ENCODE measurements at regions of chr10 and their contacts with region 1.

Region 1: GRCh38 chr10:68901104-68901927 is at the start of gene DDX50:
- DNase-seq: peak; percentile 98
- H3K4me3 Mint-ChIP-seq: peak within 1 kb of the TSS; percentile 95
- H3K27ac Mint-ChIP-seq: peak within 1 kb of the TSS; percentile 97
- H3K4me1 Mint-ChIP-seq: peaks cover 46% of the 10 kb centered on the region
- H3K27me3 Mint-ChIP-seq: no peaks in the 10 kb centered on the region
- total RNA-seq, gene DDX50: 68.8 to 71.9 TPM

Region 2: GRCh38 chr10:68208424-68209042 is 692.8 kb before region 1 on chr10:
- CTCF ChIA-PET with region 1: interaction called, 3 read pairs
- POLR2A ChIA-PET with region 1: no interaction called
- intact Hi-C with region 1: loop called (anchors 10 kb)
- DNase-seq: peak; percentile 57
- H3K4me3 Mint-ChIP-seq: no peak overlapping the region
- H3K27ac Mint-ChIP-seq: no peak overlapping the region
- H3K4me1 Mint-ChIP-seq: no peaks in the 10 kb centered on the region
- H3K27me3 Mint-ChIP-seq: peaks cover 8% of the 10 kb centered on the region

Region 3: GRCh38 chr10:68471586-68472408 is 429.5 kb before region 1 on chr10 and contains the start of gene DNA2:
- CTCF ChIA-PET with region 1: no interaction called
- POLR2A ChIA-PET with region 1: no interaction called
- intact Hi-C with region 1: loop called (anchors 2 kb)
- DNase-seq: peak; percentile 86
- H3K4me3 Mint-ChIP-seq: peak within 1 kb of the TSS; percentile 95
- H3K27ac Mint-ChIP-seq: peak within 1 kb of the TSS; percentile 89
- H3K4me1 Mint-ChIP-seq: peaks cover 19% of the 10 kb centered on the region
- H3K27me3 Mint-ChIP-seq: no peaks in the 10 kb centered on the region
- total RNA-seq, gene DNA2: 36.8 to 42.0 TPM

Region 4: DNA sequence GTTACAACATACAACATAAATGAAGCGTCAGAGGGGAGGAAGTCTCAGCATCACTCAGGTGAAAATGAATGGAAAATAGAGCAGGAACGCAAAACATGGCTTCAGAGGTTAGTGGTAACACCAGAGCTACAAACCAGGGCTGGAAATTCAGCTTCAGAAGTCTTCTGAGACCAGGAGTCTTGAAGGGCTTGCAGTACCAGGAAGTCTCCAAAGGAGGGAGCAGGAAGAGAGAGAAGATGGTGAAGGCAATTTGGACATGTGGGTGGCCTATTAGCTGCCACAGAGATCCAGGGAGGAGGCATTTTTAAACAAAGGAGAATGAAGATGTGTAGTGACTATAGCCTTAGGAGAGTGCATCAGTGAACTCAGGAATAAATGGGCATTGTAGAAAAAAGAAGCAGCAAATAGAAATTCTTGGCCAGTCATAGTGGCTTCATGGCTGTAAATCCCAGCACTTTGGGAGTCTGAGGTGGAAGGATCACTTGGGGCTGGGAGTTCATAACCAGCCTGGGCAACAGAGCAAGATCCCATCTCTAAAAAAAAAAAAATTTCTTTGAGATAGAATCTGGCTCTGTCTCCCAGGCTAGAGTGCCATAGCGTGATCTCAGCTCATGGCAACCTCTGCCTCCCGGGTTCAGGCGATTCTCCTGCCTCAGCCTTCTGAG is 350.4 kb before region 1 on chr10:
- CTCF ChIA-PET with region 1: interaction called, 3 read pairs
- POLR2A ChIA-PET with region 1: no interaction called
- intact Hi-C with region 1: loop called (anchors 2 kb)
- DNase-seq: peak; percentile 54
- H3K4me3 Mint-ChIP-seq: no peak overlapping the region
- H3K27ac Mint-ChIP-seq: no peak overlapping the region
- H3K4me1 Mint-ChIP-seq: no peaks in the 10 kb centered on the region
- H3K27me3 Mint-ChIP-seq: no peaks in the 10 kb centered on the region

Region 5: DNA sequence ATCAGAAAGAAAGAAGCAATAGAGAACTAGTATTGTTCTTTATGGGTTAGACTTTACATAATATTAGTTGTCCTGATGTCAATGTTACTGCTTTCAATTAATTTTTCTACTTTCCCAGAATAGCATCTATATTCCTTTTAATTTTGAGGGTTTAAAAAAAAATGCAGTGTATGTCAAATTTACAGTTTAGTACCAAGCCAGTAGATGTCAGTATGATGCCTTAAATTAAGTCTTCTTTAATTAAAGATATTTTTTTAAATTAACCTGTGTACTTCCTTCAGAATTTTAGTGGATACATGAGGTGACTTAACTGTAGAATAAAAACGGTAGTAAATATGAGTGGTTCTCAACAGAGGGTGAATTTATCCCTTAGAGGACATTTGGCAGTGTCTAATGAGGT is 109.2 kb before region 1 on chr10:
- CTCF ChIA-PET with region 1: no interaction called
- POLR2A ChIA-PET with region 1: interaction called, 7 read pairs
- intact Hi-C with region 1: loop called (anchors 10 kb)
- DNase-seq: no peak
- H3K4me3 Mint-ChIP-seq: no peak overlapping the region
- H3K27ac Mint-ChIP-seq: no peak overlapping the region
- H3K4me1 Mint-ChIP-seq: peaks cover 7% of the 10 kb centered on the region
- H3K27me3 Mint-ChIP-seq: no peaks in the 10 kb centered on the region

Region 6: GRCh38 chr10:68870545-68871104 is 30.7 kb before region 1 on chr10:
- CTCF ChIA-PET with region 1: no interaction called
- POLR2A ChIA-PET with region 1: no interaction called
- intact Hi-C with region 1: loop called (anchors 1 kb)
- DNase-seq: peak; percentile 40
- H3K4me3 Mint-ChIP-seq: no peak overlapping the region
- H3K27ac Mint-ChIP-seq: no peak overlapping the region
- H3K4me1 Mint-ChIP-seq: peaks cover 9% of the 10 kb centered on the region
- H3K27me3 Mint-ChIP-seq: no peaks in the 10 kb centered on the region

Region 7: GRCh38 chr10:69087590-69088470 is 186.5 kb after region 1 on chr10 and contains the start of gene SRGN:
- CTCF ChIA-PET with region 1: no interaction called
- POLR2A ChIA-PET with region 1: interaction called, 3 read pairs
- intact Hi-C with region 1: loop called (anchors 1 kb)
- DNase-seq: peak; percentile 87
- H3K4me3 Mint-ChIP-seq: peak within 1 kb of the TSS; percentile 94
- H3K27ac Mint-ChIP-seq: peak within 1 kb of the TSS; percentile 96
- H3K4me1 Mint-ChIP-seq: peaks cover 41% of the 10 kb centered on the region
- H3K27me3 Mint-ChIP-seq: no peaks in the 10 kb centered on the region
- total RNA-seq, gene SRGN: 949 to 966 TPM